Cardiac septum (tissue), 1 donor: ENCODE measurements at regions of chr20 and their contacts with region 1.

Region 1: DNA sequence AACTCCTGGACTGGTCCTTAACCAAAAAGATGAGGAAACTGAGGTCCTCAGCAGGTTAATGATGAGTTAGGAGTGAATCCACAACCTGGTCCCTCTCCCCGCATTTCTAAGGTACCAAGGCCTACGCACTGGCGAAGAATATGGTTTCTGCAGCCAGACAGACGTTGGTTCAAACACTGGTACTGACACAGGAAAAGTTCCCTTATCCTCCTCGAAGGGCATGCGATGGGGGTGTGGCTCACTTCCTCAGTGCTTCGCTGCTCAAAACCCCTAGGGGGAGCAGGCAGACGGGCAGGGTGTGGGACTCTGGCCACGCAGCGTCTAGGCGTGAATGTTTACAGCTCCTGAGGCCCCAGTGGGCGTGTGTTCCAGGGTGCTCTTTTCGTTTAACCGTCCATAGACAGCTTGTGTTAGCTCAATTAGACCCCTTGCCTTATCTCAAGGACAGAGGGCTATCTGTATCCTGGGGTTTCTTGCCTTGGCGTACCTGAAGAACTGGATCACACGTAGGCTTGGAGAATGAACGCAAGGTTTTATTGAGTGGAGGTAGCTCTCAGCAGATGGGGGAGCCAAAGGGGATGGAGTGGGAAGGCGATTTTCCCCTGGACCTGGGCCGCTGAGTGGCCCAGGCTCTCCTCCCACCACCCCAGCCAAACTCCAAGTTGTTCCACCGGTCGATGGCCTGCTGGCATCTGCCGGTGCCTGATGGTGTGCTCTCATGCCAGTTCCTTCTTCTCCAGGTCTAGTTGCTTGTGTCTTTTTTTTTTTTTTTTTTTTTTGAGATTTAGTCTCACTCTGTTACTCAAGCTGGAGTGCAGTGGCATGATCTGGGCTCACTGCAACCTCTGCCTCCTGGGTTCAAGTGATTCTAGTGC is 31.8 kb upstream of the PTPN1 start:
- DNase-seq: peak; percentile 77

Region 2: DNA sequence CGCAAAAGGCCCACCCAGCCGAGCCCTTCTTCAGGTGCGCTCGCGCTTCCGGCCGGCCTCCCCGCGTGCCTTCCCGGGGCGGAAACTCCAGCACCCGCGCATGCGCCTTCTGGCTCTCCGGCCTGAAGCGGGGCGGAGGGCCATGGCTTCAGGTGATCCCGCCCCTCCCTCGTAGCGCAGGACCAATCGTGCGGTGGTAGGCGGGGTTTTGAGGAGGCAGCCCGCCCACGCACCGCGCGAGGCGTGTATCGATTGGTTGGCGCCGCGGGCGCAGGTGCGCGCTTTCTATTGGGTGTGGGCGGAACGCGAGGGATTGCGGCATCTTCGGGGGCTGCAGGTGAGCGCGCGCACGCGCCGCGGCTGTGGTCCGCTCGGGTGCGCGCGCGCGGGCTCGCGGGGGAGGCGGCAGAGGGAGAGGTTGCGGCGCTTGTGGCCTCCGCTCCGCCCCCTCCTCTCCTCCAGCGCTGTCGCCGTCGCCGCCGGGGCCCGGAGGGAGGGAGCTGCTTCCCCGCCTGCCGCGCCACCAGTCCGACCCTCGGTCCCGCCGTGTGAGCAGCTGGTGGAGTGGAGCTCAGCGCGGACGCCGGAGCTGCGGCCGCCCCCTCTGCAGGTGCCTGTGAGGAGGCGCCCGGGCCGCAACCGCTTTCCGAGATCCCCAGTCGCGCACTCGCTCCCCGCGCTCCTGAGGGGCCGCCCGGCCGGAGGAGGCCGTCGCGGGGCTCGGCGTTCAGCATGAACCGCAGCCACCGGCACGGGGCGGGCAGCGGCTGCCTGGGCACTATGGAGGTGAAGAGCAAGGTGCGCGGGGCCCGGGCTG is 252.9 kb after region 1 on chr20 and contains the start of gene PARD6B:
- intact Hi-C with region 1: loop called (anchors 10 kb)
- DNase-seq: peak; percentile 99
- total RNA-seq, gene PARD6B: 3.7 TPM